Right ventricle myocardium superior (tissue), 1 donor: ENCODE measurements at regions of chr10 and their contacts with region 1.

Region 1: DNA sequence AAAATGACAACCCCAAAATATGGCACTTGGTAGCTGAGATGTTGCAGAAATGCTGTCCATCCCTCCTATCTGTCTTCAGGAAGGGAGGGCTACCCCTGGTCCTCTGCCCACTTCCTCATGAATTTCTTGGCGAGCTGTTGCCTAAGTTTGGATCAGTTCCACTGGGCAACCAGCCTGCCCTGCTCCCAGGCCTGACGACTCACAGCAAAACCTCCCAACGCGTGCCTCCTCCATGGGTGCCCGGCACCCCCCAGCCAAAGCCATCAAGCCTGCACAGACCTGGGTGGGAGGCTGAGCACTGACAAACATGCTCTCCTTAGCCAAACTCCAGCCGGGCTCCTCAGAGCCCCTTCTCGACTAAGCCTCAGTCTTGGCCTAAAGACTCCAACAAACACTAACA is 8.9 kb downstream of the VSTM4 start:
- DNase-seq: peak; percentile 68
- ATAC-seq: peak; percentile 36

Region 2: GRCh38 chr10:49055221-49055849 is 51.1 kb before region 1 on chr10:
- intact Hi-C with region 1: loop called (anchors 2 kb)
- DNase-seq: no peak
- ATAC-seq: no peak

Region 3: DNA sequence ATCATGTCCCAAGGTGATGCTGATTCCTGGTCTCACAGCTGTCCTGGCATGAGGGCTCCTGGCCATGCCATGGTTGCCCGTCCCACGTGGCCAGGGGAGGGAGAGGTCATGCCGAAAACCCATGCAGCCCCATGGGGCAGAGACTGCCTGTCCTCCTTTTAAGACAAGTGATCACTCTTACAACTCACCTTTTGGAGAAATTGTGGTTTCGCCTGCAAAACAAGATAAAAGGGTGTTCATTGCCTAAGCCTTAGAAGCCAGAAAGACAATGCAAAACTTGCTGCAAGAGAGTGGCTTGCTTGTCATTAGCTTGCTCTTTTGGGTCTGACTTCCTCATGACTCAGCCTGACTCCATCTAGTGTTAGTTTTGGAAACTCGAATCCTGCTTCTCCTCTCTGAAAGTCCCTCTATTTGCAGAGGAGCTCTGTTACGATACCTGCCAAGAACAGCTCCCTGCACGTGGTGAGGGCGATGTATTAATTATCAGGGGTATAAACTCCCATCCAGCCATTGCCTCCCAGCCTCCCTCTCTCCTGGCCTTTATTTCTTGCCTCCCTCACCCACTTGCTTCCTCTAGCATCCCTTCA is 55.1 kb after region 1 on chr10:
- intact Hi-C with region 1: no loop called
- DNase-seq: no peak
- ATAC-seq: peak; percentile 78